BJ (cell line): ENCODE measurements at regions of chr2 and their contacts with region 1.

Region 1: GRCh38 chr2:222848862-222849261 is 12.0 kb upstream of the ACSL3 start:
- DNase-seq: no peak
- H3K4me3 ChIP-seq: no peak overlapping the region
- H3K27me3 ChIP-seq: no peaks in the 10 kb centered on the region; the same call in 1 of the 2 replicates
- CTCF ChIP-seq: no peak

Region 2: DNA sequence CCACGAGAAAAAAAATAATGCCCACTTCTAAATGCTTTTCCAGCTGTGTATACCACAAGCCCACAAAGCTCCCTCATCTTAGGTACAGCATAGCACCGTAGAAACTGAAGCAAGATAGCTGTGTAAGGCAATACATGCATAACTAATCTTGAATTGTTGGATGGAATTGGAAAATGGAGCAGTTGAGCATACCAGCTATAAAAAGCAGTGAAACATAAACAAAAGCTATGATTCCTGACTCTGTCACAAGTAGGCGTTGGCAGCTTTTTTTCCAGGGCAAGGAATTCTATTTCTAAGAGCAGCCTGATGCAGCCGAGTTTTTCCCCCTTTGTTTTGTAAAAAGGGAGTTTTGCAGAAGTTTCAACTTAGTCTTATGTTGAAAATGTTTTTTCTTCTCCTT is 145.0 kb before region 1 on chr2:
- CTCF ChIA-PET with region 1: no interaction called
- POLR2A ChIA-PET with region 1: no interaction called
- DNase-seq: no peak
- H3K4me3 ChIP-seq: no peak overlapping the region
- H3K27me3 ChIP-seq: no peaks in the 10 kb centered on the region
- CTCF ChIP-seq: no peak

Region 3: GRCh38 chr2:222813177-222813843 is 35.6 kb before region 1 on chr2:
- CTCF ChIA-PET with region 1: no interaction called
- POLR2A ChIA-PET with region 1: interaction called, 15 read pairs
- DNase-seq: no peak
- H3K4me3 ChIP-seq: no peak overlapping the region
- H3K27me3 ChIP-seq: no peaks in the 10 kb centered on the region
- CTCF ChIP-seq: no peak

Region 4: GRCh38 chr2:222869252-222869560 is 20.3 kb after region 1 on chr2:
- CTCF ChIA-PET with region 1: no interaction called
- POLR2A ChIA-PET with region 1: no interaction called
- DNase-seq: no peak
- H3K4me3 ChIP-seq: no peak overlapping the region
- H3K27me3 ChIP-seq: no peaks in the 10 kb centered on the region
- CTCF ChIP-seq: no peak